HEK293T (cell line): ENCODE measurements at regions of chr5 and their contacts with region 1.

Region 1: DNA sequence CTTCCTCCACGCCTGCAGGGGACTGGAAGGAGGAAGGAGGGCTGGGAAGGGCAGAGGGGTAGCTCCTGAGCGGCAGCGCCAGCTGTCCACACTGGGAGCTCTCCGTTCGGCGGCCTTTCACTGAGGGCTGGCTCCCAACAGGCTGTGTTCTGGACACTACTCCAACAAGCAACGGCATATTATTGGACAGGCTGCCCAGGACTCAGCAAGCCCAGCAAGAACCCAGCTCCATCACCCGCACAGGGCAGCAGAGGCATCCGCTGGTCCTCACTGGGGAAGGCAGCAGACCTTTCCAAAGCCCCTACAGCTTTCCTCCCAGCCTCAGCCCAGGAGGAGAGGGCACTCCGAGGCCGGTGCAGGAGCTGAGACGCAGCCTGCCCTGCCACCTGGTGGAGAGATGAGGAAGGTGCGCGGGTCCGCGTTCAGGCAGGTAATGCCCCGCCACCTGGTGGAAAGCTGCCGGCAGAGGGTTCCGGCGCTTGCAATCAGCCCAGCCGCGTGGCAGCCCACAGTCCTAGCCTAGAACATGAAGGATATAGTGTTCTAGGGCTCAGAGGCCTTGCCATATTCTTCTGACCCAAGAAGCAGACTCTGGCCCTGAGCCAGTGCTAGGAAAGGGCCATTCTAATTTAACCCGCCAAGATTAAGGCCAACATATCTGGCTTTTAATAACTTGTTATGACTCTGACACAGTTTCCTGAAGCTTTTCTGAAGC is 74.4 kb downstream of the NRG2 start:
- DNase-seq: peak; percentile 91

Region 2: GRCh38 chr5:139501381-139501780 is 467.3 kb before region 1 on chr5:
- CTCF ChIA-PET with region 1: no interaction called
- POLR2A ChIA-PET with region 1: no interaction called
- DNase-seq: peak; percentile 1

Region 3: GRCh38 chr5:139774980-139775661 is 193.6 kb before region 1 on chr5:
- CTCF ChIA-PET with region 1: interaction called, 12 read pairs
- POLR2A ChIA-PET with region 1: no interaction called
- DNase-seq: peak; percentile 87

Region 4: DNA sequence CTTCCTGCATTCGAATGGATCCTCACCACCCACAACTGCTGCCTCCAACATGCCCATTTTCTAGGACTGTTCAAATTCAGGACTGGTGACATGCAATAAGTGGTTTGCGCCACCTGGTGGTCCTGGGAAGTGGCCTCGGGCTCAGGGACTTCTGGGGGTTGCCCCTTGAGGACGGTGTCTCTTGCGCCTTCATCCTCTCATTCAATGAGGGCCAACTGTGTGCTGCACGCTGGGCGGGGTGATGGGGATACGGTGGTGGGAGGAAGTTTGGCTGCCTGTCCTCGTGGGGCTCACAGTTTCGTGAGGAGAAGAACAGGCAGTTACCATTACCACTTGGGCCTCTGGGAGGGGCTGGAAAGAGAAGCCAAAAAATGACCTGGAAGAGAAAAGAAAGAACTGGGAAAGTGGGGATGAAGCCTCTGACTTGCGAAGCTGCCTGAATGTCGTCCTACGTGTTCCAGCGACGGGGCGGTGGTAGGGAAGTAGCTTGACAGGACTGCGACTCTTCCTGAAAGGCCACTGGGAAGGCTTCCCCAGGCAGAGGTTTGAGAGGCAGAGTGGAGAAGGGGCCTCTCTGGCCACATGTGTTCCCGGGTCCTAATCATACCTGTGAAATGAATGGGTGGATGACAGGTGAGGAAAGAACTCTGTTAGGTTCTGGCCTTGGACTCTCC is 124.1 kb before region 1 on chr5:
- CTCF ChIA-PET with region 1: interaction called, 16 read pairs
- POLR2A ChIA-PET with region 1: no interaction called
- DNase-seq: peak; percentile 83

Region 5: DNA sequence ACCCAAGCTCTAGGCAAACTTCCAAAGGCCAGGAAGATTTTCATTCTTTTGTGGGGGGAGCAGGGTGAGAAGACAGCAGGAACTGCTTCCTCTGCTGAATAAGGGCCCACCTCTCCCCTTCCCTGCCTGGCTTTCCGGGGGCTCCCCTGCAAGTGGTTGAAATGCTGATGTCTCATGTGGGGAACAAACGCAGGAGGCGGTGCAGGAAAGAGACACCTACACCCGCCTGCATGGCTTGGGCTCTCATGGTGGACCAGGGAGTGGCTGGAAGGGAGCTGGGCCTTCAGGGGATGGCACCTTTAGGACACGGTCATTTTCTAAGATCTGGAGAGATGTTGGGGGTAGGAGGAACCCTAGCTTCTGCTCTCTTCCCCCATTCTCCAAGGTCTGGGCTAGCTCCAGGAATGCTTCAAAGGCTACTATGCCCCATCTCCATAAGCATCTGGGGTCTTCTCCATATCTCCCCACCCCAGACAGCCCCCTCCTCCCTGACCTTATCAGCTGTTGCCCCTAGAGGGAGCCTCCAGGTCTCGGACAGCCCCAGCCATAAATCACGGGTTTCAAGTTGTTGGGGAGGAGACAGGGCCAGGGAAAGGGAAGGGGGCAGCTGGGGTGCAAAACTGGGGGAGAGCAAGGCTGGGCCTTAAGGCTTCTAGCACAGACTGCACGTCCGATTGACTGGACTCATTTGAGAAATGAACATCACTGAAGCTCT is 96.5 kb before region 1 on chr5:
- CTCF ChIA-PET with region 1: interaction called, 17 read pairs
- POLR2A ChIA-PET with region 1: no interaction called
- DNase-seq: no peak

Region 6: DNA sequence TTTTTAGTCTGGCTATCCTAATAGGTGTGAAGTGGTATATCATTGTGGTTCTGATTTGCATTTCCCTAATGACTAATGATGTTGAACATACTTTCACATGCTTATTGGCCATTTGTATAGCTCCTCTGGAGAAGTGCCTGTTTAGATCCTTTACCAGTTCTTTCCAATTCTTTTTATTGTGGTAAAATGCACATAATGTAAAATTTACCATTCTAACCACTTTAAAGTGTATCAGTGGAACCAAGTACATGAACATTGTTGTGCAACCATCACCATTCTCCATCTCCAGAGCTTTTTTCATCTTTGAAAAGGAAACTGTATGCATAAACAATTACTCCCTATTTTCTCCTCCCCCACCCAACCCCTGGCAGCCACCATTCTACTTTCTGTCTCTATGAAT is 21.0 kb before region 1 on chr5:
- CTCF ChIA-PET with region 1: interaction called, 10 read pairs
- POLR2A ChIA-PET with region 1: no interaction called
- DNase-seq: no peak

Region 7: DNA sequence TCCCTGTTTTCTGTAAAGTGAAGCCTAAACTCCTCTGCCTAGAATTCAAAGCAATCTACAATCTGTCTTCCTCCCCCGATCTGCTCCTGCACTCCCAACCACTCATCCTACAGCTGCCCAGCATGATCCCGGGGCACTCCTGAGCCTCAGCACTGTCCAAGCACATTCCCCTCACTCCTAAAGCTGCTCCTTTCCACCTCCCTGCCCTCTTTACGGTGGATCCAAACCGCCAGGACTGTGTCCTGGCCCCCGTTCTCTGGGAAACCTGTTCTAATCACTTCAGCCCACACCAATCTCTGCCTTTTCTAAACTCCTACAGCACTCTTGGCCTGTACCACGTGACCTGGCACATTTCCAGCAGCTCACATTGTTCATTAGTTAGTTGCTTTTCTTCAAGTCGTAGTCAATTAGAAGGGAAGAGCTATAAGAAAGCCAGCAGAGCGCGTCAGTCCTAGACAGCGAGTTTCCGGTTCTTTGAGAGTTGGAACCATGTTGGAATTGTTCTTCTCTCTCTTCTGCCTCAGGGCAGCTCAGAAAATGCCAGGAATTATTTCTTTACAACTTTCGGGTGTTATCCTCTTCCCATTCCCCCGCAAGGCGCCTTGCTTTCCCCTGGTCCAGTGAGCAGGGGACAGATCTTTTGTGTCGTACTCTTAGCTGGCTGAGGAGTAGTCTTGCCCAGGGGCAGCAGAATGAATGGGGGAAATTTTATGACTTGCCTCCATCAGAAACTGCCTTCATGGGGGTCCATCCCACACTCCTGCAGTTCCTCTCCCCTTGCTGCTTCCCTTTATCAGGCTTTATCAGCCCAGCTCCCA is 13.7 kb after region 1 on chr5:
- CTCF ChIA-PET with region 1: interaction called, 57 read pairs
- POLR2A ChIA-PET with region 1: no interaction called
- DNase-seq: peak; percentile 38

Region 8: DNA sequence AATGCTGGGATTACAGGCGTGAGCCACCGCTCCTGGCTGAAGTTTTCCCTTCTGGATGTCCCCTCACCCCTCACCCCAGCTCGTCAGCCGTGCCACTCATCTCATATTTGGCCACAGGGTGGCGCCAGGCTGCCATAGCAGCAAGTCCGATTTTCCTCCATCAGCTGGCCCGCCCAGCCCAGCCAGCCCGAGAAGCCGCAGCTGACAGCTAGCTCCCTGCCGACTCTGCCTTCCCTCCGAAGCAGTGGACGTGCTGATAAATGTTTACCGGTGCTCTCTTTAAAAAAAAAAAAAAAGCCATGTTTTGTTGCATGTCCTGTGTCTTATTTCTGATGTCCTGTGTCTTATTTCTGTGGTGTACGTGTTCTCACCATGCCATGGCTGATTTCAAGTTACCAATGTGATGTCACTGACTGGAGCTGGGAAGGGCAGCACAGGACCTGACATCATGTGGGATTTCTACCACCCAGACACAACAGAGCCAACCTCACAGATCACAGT is 275.9 kb after region 1 on chr5:
- CTCF ChIA-PET with region 1: no interaction called
- POLR2A ChIA-PET with region 1: no interaction called
- DNase-seq: peak; percentile 84